CD8-positive, alpha-beta T cell (primary cell): ENCODE measurements at regions of chr9 and their contacts with region 1.

Region 1: DNA sequence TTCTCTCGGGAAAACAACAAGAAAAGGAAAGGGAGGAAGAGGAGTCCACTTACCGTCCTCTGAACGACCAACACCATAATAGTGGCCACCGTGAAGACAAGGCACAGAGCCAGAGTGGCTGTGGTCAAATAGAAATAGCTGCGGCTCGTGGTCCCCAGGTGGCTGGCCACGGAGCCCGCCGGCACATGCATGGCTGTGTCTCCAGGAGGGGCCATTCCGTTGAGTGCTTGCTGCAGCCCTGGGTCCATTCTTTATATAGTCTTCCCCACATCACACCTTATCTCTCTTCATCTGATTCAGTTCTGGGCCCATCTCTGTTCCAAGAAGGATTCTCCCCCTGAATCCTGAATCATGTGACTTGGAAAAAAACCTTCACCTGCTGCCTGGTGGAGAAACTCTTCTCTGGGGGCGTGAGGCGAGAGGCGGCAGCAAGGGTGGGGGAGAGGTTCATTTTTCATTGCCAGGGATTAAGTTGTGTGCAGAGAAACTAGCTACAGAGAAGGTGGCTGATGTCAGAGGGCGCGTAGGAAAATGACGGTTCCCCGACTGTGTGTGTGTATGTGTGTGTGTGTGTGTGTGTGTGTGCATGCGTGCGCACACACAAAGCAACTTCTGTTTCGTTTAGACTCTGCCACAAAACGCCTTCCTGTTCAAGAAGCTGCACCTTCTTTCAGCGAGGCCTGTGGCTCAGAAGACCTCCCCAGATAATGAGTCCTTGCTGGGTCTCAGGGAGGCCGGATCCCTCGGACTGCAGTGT is at the start of gene TNFSF8:
- DNase-seq: peak; percentile 30 to 91 (median 76)
- ATAC-seq: peak; percentile 82
- H3K4me3 ChIP-seq: peak within 1 kb of the TSS; percentile 65 to 81
- H3K4me3 Mint-ChIP-seq: peak within 1 kb of the TSS; percentile 99
- H3K27ac ChIP-seq: peak within 1 kb of the TSS; percentile 74 to 82
- H3K27ac Mint-ChIP-seq: peak within 1 kb of the TSS; percentile 99
- H3K4me1 ChIP-seq: peaks cover 35% of the 10 kb centered on the region
- H3K4me1 Mint-ChIP-seq: peaks cover 56% of the 10 kb centered on the region
- H3K27me3 ChIP-seq: no peaks in the 10 kb centered on the region
- H3K27me3 Mint-ChIP-seq: no peaks in the 10 kb centered on the region
- CTCF ChIP-seq: no peak
- total RNA-seq, gene TNFSF8: 47.7 to 49.3 TPM

Region 2: GRCh38 chr9:114738581-114739316 is 191.5 kb before region 1 on chr9:
- CTCF ChIA-PET with region 1: interaction called, 13 read pairs
- POLR2A ChIA-PET with region 1: interaction called, 5 read pairs
- intact Hi-C with region 1: no loop called
- DNase-seq: peak; percentile 51 to 85 (median 74)
- ATAC-seq: peak; percentile 80
- H3K4me3 ChIP-seq: no peak overlapping the region
- H3K4me3 Mint-ChIP-seq: no peak overlapping the region
- H3K27ac ChIP-seq: no peak overlapping the region
- H3K27ac Mint-ChIP-seq: peak overlapping the region; percentile 47
- H3K4me1 ChIP-seq: peaks cover 25% of the 10 kb centered on the region
- H3K4me1 Mint-ChIP-seq: peaks cover 40% of the 10 kb centered on the region
- H3K27me3 ChIP-seq: no peaks in the 10 kb centered on the region
- H3K27me3 Mint-ChIP-seq: no peaks in the 10 kb centered on the region
- CTCF ChIP-seq: peak; percentile 92

Region 3: GRCh38 chr9:114914139-114914538 is 16.1 kb before region 1 on chr9:
- CTCF ChIA-PET with region 1: interaction called, 6 read pairs
- POLR2A ChIA-PET with region 1: interaction called, 34 read pairs
- intact Hi-C with region 1: loop called in 1 of 2 experiments (anchors 2 kb)
- DNase-seq: no peak
- ATAC-seq: no peak
- H3K4me3 ChIP-seq: no peak overlapping the region
- H3K4me3 Mint-ChIP-seq: no peak overlapping the region
- H3K27ac ChIP-seq: peak overlapping the region in 1 of 2 experiments; percentile 29
- H3K27ac Mint-ChIP-seq: peak overlapping the region; percentile 84
- H3K4me1 ChIP-seq: peaks cover 36% of the 10 kb centered on the region
- H3K4me1 Mint-ChIP-seq: peaks cover 86% of the 10 kb centered on the region
- H3K27me3 ChIP-seq: no peaks in the 10 kb centered on the region
- H3K27me3 Mint-ChIP-seq: no peaks in the 10 kb centered on the region
- CTCF ChIP-seq: no peak

Region 4: GRCh38 chr9:114968671-114969070 is 38.4 kb after region 1 on chr9:
- CTCF ChIA-PET with region 1: interaction called, 4 read pairs
- POLR2A ChIA-PET with region 1: interaction called, 4 read pairs
- intact Hi-C with region 1: loop called in 1 of 2 experiments (anchors 5 kb)
- DNase-seq: peak in 2 of 9 experiments; percentile 14 to 58
- ATAC-seq: peak; percentile 40
- H3K4me3 ChIP-seq: no peak overlapping the region
- H3K4me3 Mint-ChIP-seq: no peak overlapping the region
- H3K27ac ChIP-seq: no peak overlapping the region
- H3K27ac Mint-ChIP-seq: no peak overlapping the region
- H3K4me1 ChIP-seq: peaks cover 15% of the 10 kb centered on the region
- H3K4me1 Mint-ChIP-seq: peaks cover 14% of the 10 kb centered on the region
- H3K27me3 ChIP-seq: no peaks in the 10 kb centered on the region
- H3K27me3 Mint-ChIP-seq: no peaks in the 10 kb centered on the region
- CTCF ChIP-seq: no peak

Region 5: DNA sequence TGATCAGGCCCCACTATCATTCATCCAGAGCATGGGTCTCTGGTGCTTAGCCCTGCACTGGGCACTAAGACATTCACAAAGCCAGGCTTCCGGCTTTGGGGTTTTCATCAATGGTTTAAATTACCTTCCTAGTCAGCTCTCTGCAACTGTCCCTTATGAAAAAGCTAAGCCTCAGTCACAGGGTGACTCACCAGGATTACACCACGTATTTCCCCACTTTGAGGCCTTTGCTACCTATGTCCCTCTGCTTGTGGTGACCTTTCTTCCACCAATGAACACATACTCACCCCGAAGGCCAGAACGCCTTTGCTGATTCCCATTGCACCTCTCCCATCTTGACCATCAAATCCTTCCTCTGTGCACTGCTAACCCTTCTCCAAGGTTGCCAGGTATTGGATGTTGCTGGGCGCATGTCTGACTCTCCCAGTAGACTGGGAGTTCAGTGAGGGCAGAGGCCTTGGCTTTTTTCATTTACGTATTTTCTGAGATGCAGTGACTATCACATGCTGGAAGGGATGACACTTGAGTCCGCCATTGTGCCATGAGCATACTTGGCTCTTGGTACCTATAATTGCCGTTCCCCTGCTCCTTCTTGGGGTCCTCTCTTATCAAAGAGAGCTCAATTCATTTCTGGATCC is 58.8 kb after region 1 on chr9:
- CTCF ChIA-PET with region 1: no interaction called
- POLR2A ChIA-PET with region 1: no interaction called
- intact Hi-C with region 1: no loop called
- DNase-seq: peak in 1 of 9 experiments; percentile 37
- ATAC-seq: no peak
- H3K4me3 ChIP-seq: no peak overlapping the region
- H3K4me3 Mint-ChIP-seq: no peak overlapping the region
- H3K27ac ChIP-seq: peak overlapping the region in 1 of 2 experiments; percentile 2
- H3K27ac Mint-ChIP-seq: peak overlapping the region; percentile 79
- H3K4me1 ChIP-seq: peaks cover 23% of the 10 kb centered on the region
- H3K4me1 Mint-ChIP-seq: peaks cover 21% of the 10 kb centered on the region
- H3K27me3 ChIP-seq: no peaks in the 10 kb centered on the region
- H3K27me3 Mint-ChIP-seq: no peaks in the 10 kb centered on the region
- CTCF ChIP-seq: no peak

Region 6: DNA sequence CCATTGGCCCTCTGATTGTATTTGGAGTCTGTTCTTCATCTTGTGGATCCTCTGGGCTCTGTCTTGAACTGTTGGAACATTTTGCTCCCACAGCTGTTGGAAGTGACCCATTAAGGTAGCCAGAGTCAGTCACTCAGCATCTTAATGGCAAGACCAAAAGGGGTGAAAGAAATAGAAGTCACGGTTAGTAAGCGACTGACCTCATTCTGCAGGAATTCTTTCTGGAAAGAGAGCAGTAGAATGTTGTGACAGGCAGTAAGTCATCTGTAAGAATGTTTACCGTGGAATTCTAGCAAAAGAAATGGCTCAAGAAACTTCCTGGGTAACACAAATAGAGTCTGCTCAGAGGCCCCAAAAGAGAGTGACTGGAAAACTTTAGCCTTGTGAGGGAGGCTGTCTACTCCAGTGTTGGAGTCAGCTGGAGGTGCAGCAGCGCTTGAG is 216.4 kb after region 1 on chr9:
- CTCF ChIA-PET with region 1: no interaction called
- POLR2A ChIA-PET with region 1: no interaction called
- intact Hi-C with region 1: no loop called
- DNase-seq: no peak
- ATAC-seq: no peak
- H3K4me3 ChIP-seq: no peak overlapping the region
- H3K4me3 Mint-ChIP-seq: no peak overlapping the region
- H3K27ac ChIP-seq: no peak overlapping the region
- H3K27ac Mint-ChIP-seq: no peak overlapping the region
- H3K4me1 ChIP-seq: no peaks in the 10 kb centered on the region
- H3K4me1 Mint-ChIP-seq: no peaks in the 10 kb centered on the region
- H3K27me3 ChIP-seq: no peaks in the 10 kb centered on the region
- H3K27me3 Mint-ChIP-seq: peaks cover 17% of the 10 kb centered on the region
- CTCF ChIP-seq: no peak